Activated CD8-positive, alpha-beta memory T cell treated with anti-CD3 and anti-CD28 coated beads, Interleukin-2, amount 10 ng/mL, durations not matched to agents 7 days and 5 days (primary cell): ENCODE measurements at regions of chr11 and their contacts with region 1.

Region 1: GRCh38 chr11:119084663-119085436 is at the start of gene HMBS:
- DNase-seq: peak; percentile 94
- ATAC-seq: peak; percentile 90
- H3K4me3 Mint-ChIP-seq: peak within 1 kb of the TSS; percentile 93
- H3K27ac Mint-ChIP-seq: peak within 1 kb of the TSS; percentile 89
- H3K4me1 Mint-ChIP-seq: peaks cover 30% of the 10 kb centered on the region
- H3K27me3 Mint-ChIP-seq: no peaks in the 10 kb centered on the region
- total RNA-seq, gene HMBS: 26.6 to 36.7 TPM

Region 2: GRCh38 chr11:119067371-119068222 is 17.3 kb before region 1 on chr11 and contains the start of gene VPS11:
- CTCF ChIA-PET with region 1: interaction called, 15 read pairs
- DNase-seq: peak; percentile 99
- ATAC-seq: peak; percentile 99
- H3K4me3 Mint-ChIP-seq: peak within 1 kb of the TSS; percentile 85
- H3K27ac Mint-ChIP-seq: peak within 1 kb of the TSS; percentile 96
- H3K4me1 Mint-ChIP-seq: peaks cover 35% of the 10 kb centered on the region
- H3K27me3 Mint-ChIP-seq: no peaks in the 10 kb centered on the region
- total RNA-seq, gene VPS11: 30.1 to 31.2 TPM

Region 3: DNA sequence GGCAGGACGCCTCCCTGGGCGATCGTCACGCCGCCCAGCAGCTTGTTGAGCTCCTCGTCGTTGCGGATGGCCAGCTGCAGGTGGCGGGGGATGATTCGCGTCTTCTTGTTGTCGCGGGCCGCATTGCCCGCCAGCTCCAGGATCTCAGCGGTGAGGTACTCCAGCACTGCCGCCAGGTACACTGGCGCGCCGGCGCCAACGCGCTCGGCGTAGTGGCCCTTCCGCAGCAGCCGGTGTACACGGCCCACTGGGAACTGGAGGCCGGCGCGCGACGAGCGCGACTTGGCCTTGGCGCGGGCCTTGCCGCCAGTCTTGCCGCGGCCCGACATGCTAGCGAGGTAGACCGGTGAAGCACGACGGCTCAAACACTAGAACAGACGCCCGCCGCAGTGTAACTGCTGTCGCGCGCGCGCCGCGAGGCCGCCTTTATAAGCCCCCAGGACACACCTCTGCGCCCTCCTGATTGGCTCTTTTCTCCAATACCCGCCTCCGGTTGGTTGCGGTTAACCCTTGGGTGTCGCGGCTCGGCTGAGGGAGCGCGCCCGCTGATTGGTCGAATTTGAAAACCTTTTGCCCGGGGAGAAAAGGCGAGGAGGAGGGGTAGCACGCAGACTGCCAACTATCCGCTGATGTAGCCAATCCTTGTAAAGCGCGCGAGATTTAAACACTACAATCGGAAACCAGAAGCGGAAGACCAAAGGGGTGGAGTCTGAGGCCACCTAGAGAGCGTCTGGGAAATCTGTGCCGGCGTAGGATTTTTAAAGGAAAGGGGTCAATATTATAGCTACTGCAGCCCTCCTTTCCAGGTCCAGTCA is 10.4 kb after region 1 on chr11:
- CTCF ChIA-PET with region 1: interaction called, 27 read pairs
- DNase-seq: peak; percentile 100
- ATAC-seq: peak; percentile 79
- H3K4me3 Mint-ChIP-seq: peak overlapping the region; percentile 93
- H3K27ac Mint-ChIP-seq: peak overlapping the region; percentile 94
- H3K4me1 Mint-ChIP-seq: peaks cover 52% of the 10 kb centered on the region
- H3K27me3 Mint-ChIP-seq: peaks cover 2% of the 10 kb centered on the region

Region 4: DNA sequence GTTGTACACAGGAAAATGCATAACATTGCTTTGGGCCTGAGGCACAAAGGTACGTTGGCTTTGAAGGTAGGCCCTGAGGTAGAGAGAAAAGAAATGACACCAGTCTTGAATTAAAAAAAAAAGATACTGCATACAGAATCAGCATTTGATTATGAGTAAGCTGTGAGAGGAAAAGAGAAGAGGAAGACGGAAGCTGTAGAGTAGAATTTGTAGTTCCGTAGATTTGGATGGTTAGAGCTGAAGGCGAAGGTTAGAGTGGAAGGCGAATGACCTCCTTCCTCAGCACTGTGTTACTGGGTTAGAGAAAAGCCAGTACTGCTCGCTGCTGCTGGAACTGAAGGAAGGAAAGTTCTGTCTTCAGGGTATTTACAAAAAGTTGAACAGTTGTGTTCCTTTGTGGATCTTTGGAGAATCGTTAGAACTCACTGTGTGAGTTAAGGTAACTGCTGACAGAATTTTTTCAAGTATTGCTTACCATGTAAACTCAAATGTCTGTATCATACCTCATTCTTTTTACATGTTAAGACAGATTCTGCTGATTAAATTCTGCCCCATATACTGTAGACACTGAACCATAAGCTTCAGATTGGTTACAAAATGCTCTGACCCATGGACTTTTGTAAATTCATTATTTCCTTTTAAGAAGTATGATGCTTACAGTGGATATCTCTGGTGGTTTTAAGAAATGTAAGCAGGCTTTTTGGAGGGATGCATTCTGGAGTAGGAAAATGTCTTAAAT is 181.8 kb after region 1 on chr11:
- CTCF ChIA-PET with region 1: no interaction called
- DNase-seq: no peak
- ATAC-seq: no peak
- H3K4me3 Mint-ChIP-seq: peak overlapping the region; percentile 15
- H3K27ac Mint-ChIP-seq: peak overlapping the region; percentile 62
- H3K4me1 Mint-ChIP-seq: peaks cover 34% of the 10 kb centered on the region
- H3K27me3 Mint-ChIP-seq: no peaks in the 10 kb centered on the region